ENCODE measurements at regions of chr3 and their contacts with region 1.

Region 1: GRCh38 chr3:18351823-18352744 is 73.1 kb downstream of the SATB1 start:
- DNase-seq: no peak
- ATAC-seq: no peak
- H3K4me3 ChIP-seq: no peak overlapping the region
- H3K4me3 Mint-ChIP-seq: peak overlapping the region in 5 of 10 donors; percentile 4 to 64 (median 33)
- H3K27ac ChIP-seq: peak overlapping the region; percentile 15
- H3K27ac Mint-ChIP-seq: peak overlapping the region in 8 of 9 donors; percentile 32 to 94 (median 75)
- H3K4me1 ChIP-seq: no peaks in the 10 kb centered on the region
- H3K4me1 Mint-ChIP-seq: peaks cover 4 to 83% (median 60%) of the 10 kb centered on the region in 7 donors
- H3K27me3 ChIP-seq: no peaks in the 10 kb centered on the region
- H3K27me3 Mint-ChIP-seq: no peaks in the 10 kb centered on the region

Region 2: DNA sequence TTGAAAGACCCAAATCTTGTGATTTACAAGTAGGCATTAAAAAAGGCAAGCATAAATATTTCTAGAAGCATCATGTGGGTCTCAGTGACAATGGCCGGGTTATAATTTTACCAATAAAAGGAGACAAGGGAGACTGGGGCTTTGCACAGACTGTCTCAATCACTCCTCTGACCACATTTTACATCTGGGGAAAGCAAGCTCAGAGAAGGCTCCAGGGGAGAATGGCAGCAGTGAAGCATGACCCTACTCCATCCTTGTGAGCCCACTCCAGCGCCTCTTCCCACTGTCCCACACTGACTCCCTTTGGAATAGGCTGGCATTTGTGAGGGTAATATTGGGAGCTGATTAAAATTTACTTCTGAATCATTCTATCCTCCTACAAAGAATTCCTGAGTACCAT is 11.3 kb after region 1 on chr3:
- CTCF ChIA-PET with region 1: no interaction called
- POLR2A ChIA-PET with region 1: interaction called, 3 read pairs
- intact Hi-C with region 1: loop called (anchors 1 kb)
- DNase-seq: no peak
- ATAC-seq: no peak
- H3K4me3 ChIP-seq: no peak overlapping the region
- H3K4me3 Mint-ChIP-seq: peak overlapping the region in 1 of 10 donors; percentile 15
- H3K27ac ChIP-seq: no peak overlapping the region
- H3K27ac Mint-ChIP-seq: peak overlapping the region; percentile 17 to 88 (median 73)
- H3K4me1 ChIP-seq: peaks cover 0 to 11% of the 10 kb centered on the region in 2 donors
- H3K4me1 Mint-ChIP-seq: peaks cover 30 to 96% (median 85%) of the 10 kb centered on the region in 7 donors
- H3K27me3 ChIP-seq: no peaks in the 10 kb centered on the region
- H3K27me3 Mint-ChIP-seq: no peaks in the 10 kb centered on the region

Region 3: GRCh38 chr3:18369551-18370185 is 17.6 kb after region 1 on chr3:
- CTCF ChIA-PET with region 1: no interaction called
- POLR2A ChIA-PET with region 1: interaction called, 3 read pairs
- intact Hi-C with region 1: loop called in 1 of 2 experiments (anchors 2 kb)
- DNase-seq: no peak
- ATAC-seq: no peak
- H3K4me3 ChIP-seq: no peak overlapping the region
- H3K4me3 Mint-ChIP-seq: peak overlapping the region in 9 of 10 donors; percentile 23 to 74 (median 56)
- H3K27ac ChIP-seq: peak overlapping the region; percentile 4
- H3K27ac Mint-ChIP-seq: peak overlapping the region; percentile 26 to 89 (median 78)
- H3K4me1 ChIP-seq: peaks cover 10 to 48% of the 10 kb centered on the region in 2 donors
- H3K4me1 Mint-ChIP-seq: peaks cover 55 to 100% (median 99%) of the 10 kb centered on the region in 7 donors
- H3K27me3 ChIP-seq: no peaks in the 10 kb centered on the region
- H3K27me3 Mint-ChIP-seq: no peaks in the 10 kb centered on the region

Measured in naive thymus-derived CD4-positive, alpha-beta T cell (primary cell).